ENCODE measurements at regions of chr9 and their contacts with region 1.

Region 1: GRCh38 chr9:101533334-101534107 is at the start of gene RNF20:
- DNase-seq: peak; percentile 99 to 100 (median 99)
- H3K4me3 ChIP-seq: peak within 1 kb of the TSS; percentile 73 to 79
- H3K4me3 Mint-ChIP-seq: peak within 1 kb of the TSS; percentile 89 to 98 (median 92)
- H3K27ac ChIP-seq: peak within 1 kb of the TSS; percentile 98
- H3K27ac Mint-ChIP-seq: peak within 1 kb of the TSS; percentile 97 to 100 (median 99)
- H3K4me1 ChIP-seq: peaks cover 49% of the 10 kb centered on the region
- H3K4me1 Mint-ChIP-seq: peaks cover 11 to 33% (median 18%) of the 10 kb centered on the region in 4 donors
- H3K27me3 ChIP-seq: no peaks in the 10 kb centered on the region
- H3K27me3 Mint-ChIP-seq: peaks cover 0 to 3% of the 10 kb centered on the region in 2 donors
- total RNA-seq, gene RNF20: 64.5 to 67.4 TPM

Region 2: DNA sequence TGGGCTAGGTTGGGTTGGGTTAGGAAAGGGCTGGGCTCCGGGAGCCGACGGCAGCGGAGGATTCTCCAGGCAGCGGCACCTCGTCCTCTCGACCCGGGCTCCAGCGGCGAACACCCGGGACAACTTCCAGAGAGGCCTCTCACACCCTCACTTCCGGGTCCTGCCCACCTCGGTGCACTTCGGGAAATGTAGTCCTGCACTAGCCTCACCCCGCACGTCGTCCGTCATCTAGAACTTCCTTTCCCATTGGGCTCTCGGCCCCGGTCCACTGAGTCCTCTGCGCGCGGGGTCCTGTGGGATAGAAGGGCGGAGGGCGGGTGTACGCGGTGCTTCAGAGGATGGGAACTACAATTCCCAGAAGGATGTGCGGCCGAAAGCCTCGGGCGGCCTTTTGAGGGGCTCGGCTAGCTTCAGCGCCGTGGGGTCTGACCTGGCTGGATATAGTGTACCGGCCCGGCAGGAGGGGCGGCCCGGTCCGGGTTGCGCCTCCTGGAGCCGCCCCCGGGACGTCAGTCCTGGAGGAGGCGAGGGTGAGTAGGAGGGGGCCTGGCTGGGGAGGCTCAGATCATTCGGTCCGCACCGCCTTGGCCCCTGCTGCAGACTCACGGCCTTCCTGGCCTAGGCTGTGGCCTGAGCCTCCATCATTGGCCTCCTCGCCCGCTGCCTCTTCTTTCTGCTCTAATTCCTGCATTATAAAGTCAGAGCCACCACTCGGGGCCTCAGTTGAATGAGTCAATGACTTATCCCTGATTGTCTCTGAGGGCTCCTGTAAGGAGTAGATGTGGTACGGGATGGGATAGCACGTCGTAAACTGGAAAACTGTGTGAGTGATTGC is 1434.4 kb before region 1 on chr9 and contains the starts of genes ERP44 and INVS:
- CTCF ChIA-PET with region 1: no interaction called
- POLR2A ChIA-PET with region 1: no interaction called
- intact Hi-C with region 1: loop called (anchors 5 kb)
- DNase-seq: peak; percentile 96 to 99 (median 96)
- H3K4me3 ChIP-seq: peak within 1 kb of the TSS; percentile 85 to 89
- H3K4me3 Mint-ChIP-seq: peak within 1 kb of the TSS; percentile 94 to 100 (median 100)
- H3K27ac ChIP-seq: peak within 1 kb of the TSS; percentile 80
- H3K27ac Mint-ChIP-seq: peak within 1 kb of the TSS; percentile 91 to 99 (median 98)
- H3K4me1 ChIP-seq: peaks cover 26% of the 10 kb centered on the region
- H3K4me1 Mint-ChIP-seq: peaks cover 21 to 56% (median 36%) of the 10 kb centered on the region in 4 donors
- H3K27me3 ChIP-seq: no peaks in the 10 kb centered on the region
- H3K27me3 Mint-ChIP-seq: no peaks in the 10 kb centered on the region
- total RNA-seq, gene ERP44: 16.5 to 17.0 TPM
- total RNA-seq, gene INVS: 17.6 to 22.9 TPM

Region 3: DNA sequence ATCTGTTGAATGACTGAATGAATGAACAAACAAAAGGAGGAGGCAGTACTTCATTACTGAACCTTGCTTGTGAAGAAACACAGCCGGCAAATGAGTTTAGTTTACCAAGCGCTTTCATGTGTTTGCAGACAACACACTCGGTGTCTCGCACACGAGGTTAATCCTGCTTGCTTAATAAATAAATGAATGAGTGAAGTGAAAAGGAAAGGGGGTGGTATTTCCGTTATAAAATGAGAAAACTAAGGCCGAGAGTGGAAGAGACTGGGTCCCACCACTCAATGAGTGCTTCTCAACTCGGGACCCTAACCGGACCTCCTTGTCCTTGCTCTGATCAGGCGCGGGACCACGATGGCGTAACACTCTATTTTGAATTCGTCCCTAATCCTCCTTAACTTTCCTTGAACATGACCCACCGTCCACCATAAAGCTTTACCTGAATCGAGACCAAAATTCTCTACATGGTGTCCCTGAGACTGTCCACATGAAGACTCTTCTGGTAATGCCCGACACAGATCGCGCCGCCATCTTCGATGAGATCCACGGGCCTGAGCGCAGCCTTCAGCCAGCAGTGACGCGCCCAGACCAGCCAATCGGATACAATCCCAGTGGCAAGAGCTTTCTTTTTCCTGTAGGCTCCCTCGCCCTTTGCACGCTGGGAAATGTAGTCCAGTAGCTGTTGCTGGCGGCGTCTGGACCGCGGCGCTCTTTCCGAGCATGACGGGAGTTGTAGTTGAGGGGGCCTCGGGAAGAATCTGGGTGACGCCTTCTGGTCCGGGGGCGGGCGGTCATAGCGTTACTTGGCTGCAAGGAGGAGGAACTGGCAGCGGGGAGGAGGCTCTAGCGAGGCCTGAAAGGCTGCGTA is 135.2 kb before region 1 on chr9 and contains the starts of genes MRPL50 and ZNF189:
- CTCF ChIA-PET with region 1: interaction called, 13 read pairs
- POLR2A ChIA-PET with region 1: interaction called, 24 read pairs
- intact Hi-C with region 1: loop called (anchors 1 kb)
- DNase-seq: peak; percentile 95 to 100 (median 97)
- H3K4me3 ChIP-seq: peak within 1 kb of the TSS; percentile 75 to 86
- H3K4me3 Mint-ChIP-seq: peak within 1 kb of the TSS; percentile 98 to 100 (median 99)
- H3K27ac ChIP-seq: peak within 1 kb of the TSS; percentile 93
- H3K27ac Mint-ChIP-seq: peak within 1 kb of the TSS; percentile 98 to 100 (median 99)
- H3K4me1 ChIP-seq: peaks cover 64% of the 10 kb centered on the region
- H3K4me1 Mint-ChIP-seq: peaks cover 61 to 87% (median 78%) of the 10 kb centered on the region in 4 donors
- H3K27me3 ChIP-seq: no peaks in the 10 kb centered on the region
- H3K27me3 Mint-ChIP-seq: no peaks in the 10 kb centered on the region
- total RNA-seq, gene MRPL50: 20.9 to 23.0 TPM
- total RNA-seq, gene ZNF189: 22.1 to 23.2 TPM

Region 4: DNA sequence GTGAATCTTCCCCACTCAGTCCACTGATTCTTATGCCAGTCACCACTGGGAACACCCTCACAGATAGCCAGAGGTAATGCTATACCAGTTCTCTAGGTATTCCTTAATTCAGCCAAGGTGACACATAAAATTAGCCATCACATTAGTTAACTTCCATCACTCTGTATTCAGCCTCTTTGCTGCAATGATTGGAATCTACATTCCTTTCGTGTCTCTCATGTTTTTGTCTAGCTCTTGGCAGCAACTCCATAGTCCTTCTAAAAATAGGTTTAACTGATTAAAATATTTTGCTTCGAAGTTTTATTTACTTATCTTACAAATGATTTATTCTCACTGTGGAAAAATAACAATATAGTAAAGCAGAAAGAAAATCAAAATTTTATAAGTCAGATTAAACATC is 19.4 kb before region 1 on chr9:
- CTCF ChIA-PET with region 1: interaction called, 10 read pairs
- POLR2A ChIA-PET with region 1: no interaction called
- intact Hi-C with region 1: no loop called
- DNase-seq: no peak
- H3K4me3 ChIP-seq: no peak overlapping the region
- H3K4me3 Mint-ChIP-seq: no peak overlapping the region
- H3K27ac ChIP-seq: no peak overlapping the region
- H3K27ac Mint-ChIP-seq: no peak overlapping the region
- H3K4me1 ChIP-seq: no peaks in the 10 kb centered on the region
- H3K4me1 Mint-ChIP-seq: peaks cover 0 to 2% (median 0%) of the 10 kb centered on the region in 4 donors
- H3K27me3 ChIP-seq: peaks cover 4% of the 10 kb centered on the region
- H3K27me3 Mint-ChIP-seq: peaks cover 11 to 16% of the 10 kb centered on the region in 2 donors

Region 5: GRCh38 chr9:101578378-101578777 is 44.9 kb after region 1 on chr9:
- CTCF ChIA-PET with region 1: no interaction called
- POLR2A ChIA-PET with region 1: interaction called, 11 read pairs
- intact Hi-C with region 1: no loop called
- DNase-seq: no peak
- H3K4me3 ChIP-seq: no peak overlapping the region
- H3K4me3 Mint-ChIP-seq: no peak overlapping the region
- H3K27ac ChIP-seq: no peak overlapping the region
- H3K27ac Mint-ChIP-seq: no peak overlapping the region
- H3K4me1 ChIP-seq: peaks cover 16% of the 10 kb centered on the region
- H3K4me1 Mint-ChIP-seq: peaks cover 9 to 17% (median 14%) of the 10 kb centered on the region in 4 donors
- H3K27me3 ChIP-seq: no peaks in the 10 kb centered on the region
- H3K27me3 Mint-ChIP-seq: no peaks in the 10 kb centered on the region

Measured in CD4-positive, alpha-beta memory T cell (primary cell).